Activated naive CD4-positive, alpha-beta T cell treated with anti-CD3 and anti-CD28 coated beads for 36 hours (primary cell): ENCODE measurements at regions of chr12 and their contacts with region 1.

Region 1: GRCh38 chr12:89542912-89543592 is 17.2 kb upstream of the POC1B start:
- DNase-seq: peak; percentile 79
- H3K4me3 Mint-ChIP-seq: no peak overlapping the region
- H3K27ac Mint-ChIP-seq: no peak overlapping the region
- H3K4me1 Mint-ChIP-seq: peaks cover 4% of the 10 kb centered on the region
- H3K27me3 Mint-ChIP-seq: no peaks in the 10 kb centered on the region

Region 2: GRCh38 chr12:89319122-89319521 is 223.9 kb before region 1 on chr12:
- CTCF ChIA-PET with region 1: no interaction called
- intact Hi-C with region 1: no loop called
- DNase-seq: no peak
- H3K4me3 Mint-ChIP-seq: no peak overlapping the region
- H3K27ac Mint-ChIP-seq: no peak overlapping the region
- H3K4me1 Mint-ChIP-seq: peaks cover 12% of the 10 kb centered on the region
- H3K27me3 Mint-ChIP-seq: no peaks in the 10 kb centered on the region

Region 3: GRCh38 chr12:89701606-89702206 is 158.7 kb after region 1 on chr12:
- CTCF ChIA-PET with region 1: interaction called, 4 read pairs
- intact Hi-C with region 1: loop called (anchors 1 kb)
- DNase-seq: peak; percentile 22
- H3K4me3 Mint-ChIP-seq: no peak overlapping the region
- H3K27ac Mint-ChIP-seq: no peak overlapping the region
- H3K4me1 Mint-ChIP-seq: peaks cover 67% of the 10 kb centered on the region
- H3K27me3 Mint-ChIP-seq: no peaks in the 10 kb centered on the region

Region 4: DNA sequence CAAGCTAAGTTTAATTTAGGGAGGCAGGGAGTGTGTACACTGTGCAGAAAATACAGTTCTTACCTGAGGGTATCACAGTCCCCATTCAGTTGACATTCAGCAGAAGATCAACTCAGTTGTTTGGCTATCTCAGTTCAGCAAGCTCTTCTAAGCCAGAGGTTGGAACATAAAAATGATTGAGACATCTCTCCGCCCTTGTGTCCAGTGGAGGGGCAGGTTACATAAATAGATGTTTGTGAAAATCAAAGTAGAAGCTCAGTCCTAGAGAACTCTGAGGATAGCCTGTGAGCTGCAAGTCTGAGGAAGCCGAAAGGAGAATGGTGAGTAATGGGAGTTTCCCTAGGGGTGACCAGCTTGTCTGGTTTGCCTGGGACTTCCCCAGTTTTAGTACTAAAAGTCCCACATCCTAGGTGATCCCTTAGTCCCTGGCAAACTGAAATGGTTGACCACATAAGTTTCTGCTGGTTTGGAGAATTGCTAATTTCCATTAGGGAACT is 417.0 kb after region 1 on chr12:
- CTCF ChIA-PET with region 1: no interaction called
- intact Hi-C with region 1: loop called (anchors 5 kb)
- DNase-seq: peak; percentile 51
- H3K4me3 Mint-ChIP-seq: no peak overlapping the region
- H3K27ac Mint-ChIP-seq: no peak overlapping the region
- H3K4me1 Mint-ChIP-seq: peaks cover 14% of the 10 kb centered on the region
- H3K27me3 Mint-ChIP-seq: no peaks in the 10 kb centered on the region

Region 5: DNA sequence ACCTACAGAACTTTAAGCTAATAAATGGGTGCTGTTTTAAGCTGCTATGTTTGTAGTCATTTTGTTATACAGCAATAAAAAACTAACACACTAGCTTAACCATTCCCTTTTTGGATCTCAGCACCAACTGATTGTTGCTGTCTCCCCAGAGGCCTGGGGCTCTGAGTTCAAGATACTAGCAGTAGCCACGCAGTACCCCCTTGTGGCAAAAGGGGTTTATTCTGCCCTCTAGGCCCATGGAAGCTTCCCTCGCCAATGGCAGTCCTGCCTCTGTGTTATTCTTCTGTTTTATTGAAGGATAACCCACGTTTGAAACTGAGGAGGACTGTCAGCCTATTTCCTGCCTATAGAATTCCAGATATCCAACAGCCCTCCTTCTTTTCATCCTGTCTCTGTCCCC is 620.9 kb after region 1 on chr12:
- CTCF ChIA-PET with region 1: no interaction called
- intact Hi-C with region 1: loop called (anchors 1 kb)
- DNase-seq: peak; percentile 25
- H3K4me3 Mint-ChIP-seq: no peak overlapping the region
- H3K27ac Mint-ChIP-seq: no peak overlapping the region
- H3K4me1 Mint-ChIP-seq: no peaks in the 10 kb centered on the region
- H3K27me3 Mint-ChIP-seq: no peaks in the 10 kb centered on the region

Region 6: GRCh38 chr12:90854136-90854689 is 1311.2 kb after region 1 on chr12:
- CTCF ChIA-PET with region 1: interaction called, 3 read pairs
- intact Hi-C with region 1: loop called (anchors 1 kb)
- DNase-seq: peak; percentile 16
- H3K4me3 Mint-ChIP-seq: no peak overlapping the region
- H3K27ac Mint-ChIP-seq: no peak overlapping the region
- H3K4me1 Mint-ChIP-seq: no peaks in the 10 kb centered on the region
- H3K27me3 Mint-ChIP-seq: no peaks in the 10 kb centered on the region